Motor neuron (in vitro differentiated cells): ENCODE measurements at regions of chr21 and their contacts with region 1.

Region 1: DNA sequence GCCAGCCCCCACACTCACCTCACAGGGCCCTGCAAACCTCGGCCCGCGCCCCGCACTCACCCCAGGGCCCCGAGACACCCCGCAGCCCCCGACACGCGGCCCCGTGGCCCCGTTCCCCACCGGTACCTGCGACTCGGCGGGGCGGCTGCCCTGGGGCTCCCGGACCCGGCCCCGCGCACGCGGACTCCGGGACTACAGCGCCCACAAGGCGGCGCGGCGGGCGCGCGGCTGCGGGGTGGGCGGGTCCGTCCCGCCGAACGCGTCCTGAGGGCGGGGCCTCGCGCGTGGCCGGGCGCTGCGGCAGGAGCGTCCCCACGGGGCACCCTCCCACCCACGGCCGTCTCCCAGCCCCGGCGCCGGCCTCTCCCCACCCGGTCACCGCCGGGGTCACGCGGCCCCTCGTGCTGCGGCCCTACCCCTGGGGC is at the start of gene SLC19A1:
- ATAC-seq: peak; percentile 73 to 87 (median 85)
- H3K4me3 ChIP-seq: peak within 1 kb of the TSS; percentile 84 to 100 (median 98)
- H3K27ac ChIP-seq: peak within 1 kb of the TSS in 1 of 2 donors; percentile 37
- H3K4me1 ChIP-seq: peaks cover 14 to 21% of the 10 kb centered on the region in 2 donors
- total RNA-seq, gene SLC19A1: 4.0 to 40.5 (median 8.2) TPM

Region 2: GRCh38 chr21:45820171-45821091 is 278.2 kb after region 1 on chr21:
- in situ Hi-C with region 1: loop called in 1 of 9 experiments (anchors 10 kb)
- ATAC-seq: peak; percentile 93 to 98 (median 96)
- H3K4me3 ChIP-seq: no peak overlapping the region
- H3K27ac ChIP-seq: no peak overlapping the region
- H3K4me1 ChIP-seq: peaks cover 11 to 20% of the 10 kb centered on the region in 2 donors